AG04449 (cell line): ENCODE measurements at regions of chr11 and their contacts with region 1.

Region 1: DNA sequence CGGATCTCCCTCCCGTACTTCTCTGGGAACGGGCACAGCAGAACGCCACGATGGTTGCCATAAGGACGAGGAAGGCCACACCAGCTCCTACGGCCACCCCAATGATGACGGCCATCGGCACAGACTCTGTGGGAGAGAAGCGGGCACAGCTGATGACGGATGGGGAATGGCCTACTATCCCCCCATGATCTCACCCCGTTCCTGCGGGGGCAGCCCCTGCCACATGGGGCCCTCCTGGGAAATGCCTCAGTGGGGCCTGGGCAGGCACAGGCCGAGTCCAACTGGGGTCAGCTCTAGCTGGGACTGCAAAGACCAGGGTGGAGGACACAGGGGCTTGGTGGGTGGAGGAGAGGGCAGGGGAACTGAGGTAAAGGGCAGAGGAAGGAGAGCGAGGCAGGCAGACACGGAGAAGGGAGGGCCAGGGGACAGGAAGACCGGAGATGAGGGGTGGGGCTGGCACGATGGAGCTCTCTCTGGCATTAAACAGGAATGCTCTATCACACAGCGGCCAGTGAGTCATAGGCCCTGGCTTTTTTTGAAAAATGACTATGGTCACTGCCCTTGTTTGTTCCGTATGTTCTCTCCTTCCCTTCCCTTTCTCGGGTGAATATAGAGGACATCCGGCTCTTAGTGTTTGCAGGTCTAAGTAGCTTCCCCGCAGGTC is 76.0 kb downstream of the ST3GAL4 start:
- DNase-seq: peak; percentile 21
- H3K4me3 ChIP-seq: no peak overlapping the region
- CTCF ChIP-seq: no peak

Region 2: GRCh38 chr11:126416542-126417090 is 14.9 kb before region 1 on chr11:
- CTCF ChIA-PET with region 1: interaction called, 27 read pairs
- POLR2A ChIA-PET with region 1: no interaction called
- DNase-seq: no peak
- H3K4me3 ChIP-seq: peak overlapping the region; percentile 55
- CTCF ChIP-seq: no peak

Region 3: DNA sequence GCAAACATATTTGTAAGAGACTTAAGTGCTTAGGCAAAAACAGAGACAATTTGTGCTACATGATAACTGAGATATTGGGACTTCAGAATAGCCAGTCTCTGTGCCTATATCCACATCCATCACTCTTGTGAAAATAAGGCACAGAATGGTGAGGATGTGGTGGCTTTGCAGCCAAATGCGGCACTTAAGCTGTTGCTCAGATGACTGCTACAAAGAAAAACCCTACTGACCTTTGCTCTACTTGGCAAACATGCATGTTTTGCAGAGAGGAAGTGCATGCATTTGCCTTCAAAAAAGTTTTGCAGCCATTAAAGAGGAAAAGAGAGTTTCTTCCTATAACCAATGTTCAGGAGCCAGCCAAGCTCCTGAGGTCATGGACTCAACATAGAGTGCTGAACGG is 1244.0 kb after region 1 on chr11:
- CTCF ChIA-PET with region 1: no interaction called
- POLR2A ChIA-PET with region 1: no interaction called
- DNase-seq: no peak
- H3K4me3 ChIP-seq: no peak overlapping the region
- CTCF ChIP-seq: no peak